CD4-positive, alpha-beta T cell (primary cell): ENCODE measurements at regions of chr6 and their contacts with region 1.

Region 1: DNA sequence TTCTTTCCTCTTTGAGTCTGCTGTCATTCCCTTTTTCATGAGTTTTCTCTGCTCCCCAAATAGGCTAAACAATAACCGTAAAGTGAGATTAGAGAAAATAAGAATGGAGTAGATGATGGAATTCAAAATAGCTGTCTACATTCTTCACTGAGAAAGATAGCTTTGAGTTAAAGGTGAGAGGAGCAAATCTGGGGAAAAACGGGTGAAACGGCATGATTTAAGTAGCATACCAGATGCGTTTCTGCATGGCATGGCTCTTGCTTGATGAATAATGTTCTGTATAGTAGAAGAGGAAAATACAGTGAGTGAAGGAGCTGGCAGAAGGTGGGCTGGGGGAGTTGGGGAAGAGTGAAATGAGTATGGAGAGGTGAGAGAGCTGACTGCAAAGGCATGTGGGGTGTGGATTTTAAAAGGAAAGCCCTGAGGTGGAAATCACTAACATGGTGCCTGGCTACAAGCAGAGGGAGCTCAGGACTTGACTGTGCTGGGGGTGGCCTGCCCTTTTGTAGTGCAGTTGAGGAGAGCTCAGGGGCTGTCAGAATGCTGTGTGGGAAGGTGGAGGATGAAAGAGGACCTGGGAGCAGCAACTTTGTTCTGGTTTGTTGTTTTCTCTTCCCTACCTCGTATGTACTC is 8.8 kb downstream of the BICRAL start:
- DNase-seq: peak in 1 of 14 experiments; percentile 32
- ATAC-seq: no peak
- H3K4me3 ChIP-seq: no peak overlapping the region
- H3K4me3 Mint-ChIP-seq: no peak overlapping the region
- H3K27ac ChIP-seq: peak overlapping the region in 1 of 2 donors; percentile 11
- H3K27ac Mint-ChIP-seq: no peak overlapping the region
- H3K4me1 ChIP-seq: peaks cover 47% of the 10 kb centered on the region
- H3K4me1 Mint-ChIP-seq: peaks cover 28% of the 10 kb centered on the region
- H3K27me3 ChIP-seq: no peaks in the 10 kb centered on the region
- H3K27me3 Mint-ChIP-seq: no peaks in the 10 kb centered on the region
- CTCF ChIP-seq: no peak

Region 2: DNA sequence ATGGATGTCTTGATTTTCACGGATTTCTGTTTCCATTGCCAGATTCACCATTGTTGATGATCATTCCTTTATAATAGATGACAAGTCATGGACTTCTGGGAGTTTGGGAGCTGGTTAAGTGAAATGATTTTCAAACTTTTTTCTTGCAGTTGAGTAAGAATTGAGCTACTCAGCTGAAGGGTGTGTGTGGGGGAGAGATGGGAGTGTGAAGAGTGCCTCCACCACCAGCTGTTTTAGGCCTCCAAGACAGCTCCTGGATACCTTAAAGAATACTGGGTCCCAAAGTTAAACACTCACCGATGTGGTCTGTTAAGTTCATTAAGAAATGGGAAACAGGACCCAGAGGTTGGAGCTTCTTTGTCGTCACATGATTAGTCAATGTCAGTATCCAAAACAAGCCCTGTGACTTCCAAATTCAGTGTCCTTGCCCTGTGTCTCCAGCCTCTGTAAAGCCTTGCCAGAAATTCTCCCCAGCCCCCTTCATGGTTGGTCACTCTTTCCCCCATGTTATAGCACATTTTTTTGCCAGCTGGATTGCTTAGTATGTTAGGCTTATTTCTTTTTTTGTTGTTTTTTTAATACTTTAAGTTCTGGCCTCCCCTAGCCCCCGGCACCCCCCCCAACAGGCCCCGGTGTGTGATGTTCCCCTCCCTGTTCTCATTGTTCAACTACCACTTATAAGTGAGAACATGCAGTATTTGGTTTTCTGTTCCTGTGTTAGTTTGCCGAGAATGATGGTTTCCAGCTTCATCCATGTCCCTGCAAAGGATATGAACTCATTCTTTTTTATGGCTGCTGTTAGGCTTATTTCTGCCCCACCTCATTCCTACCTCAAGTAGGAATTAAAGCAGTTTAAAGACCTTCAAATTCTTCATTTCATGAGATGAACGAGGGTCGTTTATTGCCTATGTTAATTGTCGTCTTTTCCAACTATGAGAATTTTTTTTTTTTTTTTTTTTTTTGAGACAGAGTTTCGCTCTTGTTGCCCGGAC is 18.1 kb after region 1 on chr6:
- CTCF ChIA-PET with region 1: interaction called, 3 read pairs
- POLR2A ChIA-PET with region 1: interaction called, 3 read pairs
- intact Hi-C with region 1: loop called in 1 of 2 experiments (anchors 2 kb)
- DNase-seq: no peak
- ATAC-seq: no peak
- H3K4me3 ChIP-seq: no peak overlapping the region
- H3K4me3 Mint-ChIP-seq: no peak overlapping the region
- H3K27ac ChIP-seq: no peak overlapping the region
- H3K27ac Mint-ChIP-seq: no peak overlapping the region
- H3K4me1 ChIP-seq: no peaks in the 10 kb centered on the region
- H3K4me1 Mint-ChIP-seq: peaks cover 16% of the 10 kb centered on the region
- H3K27me3 ChIP-seq: no peaks in the 10 kb centered on the region
- H3K27me3 Mint-ChIP-seq: no peaks in the 10 kb centered on the region
- CTCF ChIP-seq: no peak

Region 3: DNA sequence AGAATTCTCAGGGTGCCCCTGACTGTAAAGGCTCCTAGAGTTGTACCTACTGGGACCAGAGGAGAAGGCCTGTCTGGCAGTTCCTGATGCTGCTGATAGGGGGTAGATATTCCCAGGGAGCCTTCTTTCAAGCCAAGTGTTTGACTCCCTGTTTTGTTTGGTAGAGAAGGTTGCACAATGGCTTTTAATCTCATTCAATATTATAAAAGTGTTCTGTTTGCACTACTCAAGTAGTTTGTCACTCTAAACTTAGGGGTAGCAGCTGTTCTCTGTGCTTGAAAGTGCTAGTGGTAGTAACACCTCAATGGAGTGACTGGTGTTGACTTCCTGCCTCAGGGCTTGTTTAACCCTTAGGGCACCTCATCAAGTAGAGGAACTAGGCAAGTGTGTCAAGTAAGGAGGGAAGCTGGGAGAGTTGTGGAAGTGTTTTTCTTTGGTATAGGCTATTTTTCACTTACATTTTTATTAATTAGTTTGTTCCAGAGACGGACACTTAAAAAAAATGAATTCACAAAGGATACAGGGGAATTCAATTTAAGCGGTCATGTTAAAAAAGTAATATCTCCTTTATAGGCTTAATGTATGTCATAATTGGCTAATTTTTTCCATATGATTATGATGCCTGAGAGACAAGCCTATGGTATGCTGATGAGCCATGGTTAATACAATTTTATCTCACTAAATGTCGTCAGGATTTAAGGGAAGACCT is 29.3 kb after region 1 on chr6:
- CTCF ChIA-PET with region 1: interaction called, 4 read pairs
- POLR2A ChIA-PET with region 1: no interaction called
- intact Hi-C with region 1: loop called in 1 of 2 experiments (anchors 5 kb)
- DNase-seq: peak in 5 of 14 experiments; percentile 1 to 51 (median 35)
- ATAC-seq: peak; percentile 78
- H3K4me3 ChIP-seq: no peak overlapping the region
- H3K4me3 Mint-ChIP-seq: no peak overlapping the region
- H3K27ac ChIP-seq: no peak overlapping the region
- H3K27ac Mint-ChIP-seq: peak overlapping the region; percentile 86
- H3K4me1 ChIP-seq: peaks cover 7% of the 10 kb centered on the region
- H3K4me1 Mint-ChIP-seq: peaks cover 39% of the 10 kb centered on the region
- H3K27me3 ChIP-seq: no peaks in the 10 kb centered on the region
- H3K27me3 Mint-ChIP-seq: no peaks in the 10 kb centered on the region
- CTCF ChIP-seq: no peak

Region 4: DNA sequence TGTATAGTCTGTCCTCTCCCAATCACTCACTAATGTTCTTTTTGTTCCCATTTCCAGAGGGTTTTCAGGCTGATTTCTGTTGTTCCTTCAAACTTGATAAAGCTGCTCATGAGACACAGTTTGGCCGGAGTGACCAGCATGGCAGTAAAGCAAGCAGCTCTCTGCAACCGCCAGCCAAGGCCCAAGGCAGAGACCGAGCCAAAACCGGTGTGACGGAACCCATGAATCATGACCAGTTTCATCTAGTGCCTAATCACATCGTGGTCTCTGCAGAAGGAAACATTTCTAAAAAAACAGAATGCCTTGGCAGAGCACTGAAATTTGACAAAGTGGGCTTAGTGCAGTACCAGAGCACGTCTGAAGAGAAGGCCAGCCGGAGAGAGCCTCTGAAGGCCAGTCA is 73.9 kb after region 1 on chr6:
- CTCF ChIA-PET with region 1: no interaction called
- POLR2A ChIA-PET with region 1: interaction called, 3 read pairs
- intact Hi-C with region 1: loop called in 1 of 2 experiments (anchors 5 kb)
- DNase-seq: no peak
- ATAC-seq: no peak
- H3K4me3 ChIP-seq: no peak overlapping the region
- H3K4me3 Mint-ChIP-seq: no peak overlapping the region
- H3K27ac ChIP-seq: peak overlapping the region in 1 of 2 donors; percentile 10
- H3K27ac Mint-ChIP-seq: no peak overlapping the region
- H3K4me1 ChIP-seq: no peaks in the 10 kb centered on the region
- H3K4me1 Mint-ChIP-seq: no peaks in the 10 kb centered on the region
- H3K27me3 ChIP-seq: no peaks in the 10 kb centered on the region
- H3K27me3 Mint-ChIP-seq: no peaks in the 10 kb centered on the region
- CTCF ChIP-seq: no peak

Region 5: GRCh38 chr6:42879372-42880239 is 88.9 kb after region 1 on chr6 and contains the start of gene RPL7L1:
- CTCF ChIA-PET with region 1: no interaction called
- POLR2A ChIA-PET with region 1: interaction called, 5 read pairs
- intact Hi-C with region 1: loop called in 1 of 2 experiments (anchors 5 kb)
- DNase-seq: peak; percentile 68 to 93 (median 79)
- ATAC-seq: peak; percentile 92
- H3K4me3 ChIP-seq: peak within 1 kb of the TSS; percentile 69
- H3K4me3 Mint-ChIP-seq: peak within 1 kb of the TSS; percentile 93
- H3K27ac ChIP-seq: peak within 1 kb of the TSS; percentile 94 to 95
- H3K27ac Mint-ChIP-seq: peak within 1 kb of the TSS; percentile 97
- H3K4me1 ChIP-seq: peaks cover 41% of the 10 kb centered on the region
- H3K4me1 Mint-ChIP-seq: peaks cover 23% of the 10 kb centered on the region
- H3K27me3 ChIP-seq: no peaks in the 10 kb centered on the region
- H3K27me3 Mint-ChIP-seq: no peaks in the 10 kb centered on the region
- CTCF ChIP-seq: no peak
- total RNA-seq, gene RPL7L1: 76.1 TPM

Region 6: GRCh38 chr6:44237813-44238433 is 1447.3 kb after region 1 on chr6:
- CTCF ChIA-PET with region 1: no interaction called
- POLR2A ChIA-PET with region 1: no interaction called
- intact Hi-C with region 1: no loop called
- DNase-seq: peak; percentile 61 to 90 (median 74)
- ATAC-seq: peak; percentile 89
- H3K4me3 ChIP-seq: peak overlapping the region; percentile 64
- H3K4me3 Mint-ChIP-seq: peak overlapping the region; percentile 90
- H3K27ac ChIP-seq: peak overlapping the region; percentile 74 to 80
- H3K27ac Mint-ChIP-seq: peak overlapping the region; percentile 86
- H3K4me1 ChIP-seq: peaks cover 18% of the 10 kb centered on the region
- H3K4me1 Mint-ChIP-seq: peaks cover 8% of the 10 kb centered on the region
- H3K27me3 ChIP-seq: no peaks in the 10 kb centered on the region
- H3K27me3 Mint-ChIP-seq: no peaks in the 10 kb centered on the region
- CTCF ChIP-seq: peak; percentile 99